Calu3 (cell line): ENCODE measurements at regions of chr20 and their contacts with region 1.

Region 1: GRCh38 chr20:41030531-41031244 is 2.1 kb downstream of the TOP1 start:
- DNase-seq: no peak
- H3K4me3 Mint-ChIP-seq: peak overlapping the region; percentile 83
- H3K27ac Mint-ChIP-seq: peak overlapping the region; percentile 97
- H3K4me1 Mint-ChIP-seq: peaks cover 64% of the 10 kb centered on the region
- H3K27me3 Mint-ChIP-seq: no peaks in the 10 kb centered on the region
- CTCF ChIP-seq: no peak

Region 2: DNA sequence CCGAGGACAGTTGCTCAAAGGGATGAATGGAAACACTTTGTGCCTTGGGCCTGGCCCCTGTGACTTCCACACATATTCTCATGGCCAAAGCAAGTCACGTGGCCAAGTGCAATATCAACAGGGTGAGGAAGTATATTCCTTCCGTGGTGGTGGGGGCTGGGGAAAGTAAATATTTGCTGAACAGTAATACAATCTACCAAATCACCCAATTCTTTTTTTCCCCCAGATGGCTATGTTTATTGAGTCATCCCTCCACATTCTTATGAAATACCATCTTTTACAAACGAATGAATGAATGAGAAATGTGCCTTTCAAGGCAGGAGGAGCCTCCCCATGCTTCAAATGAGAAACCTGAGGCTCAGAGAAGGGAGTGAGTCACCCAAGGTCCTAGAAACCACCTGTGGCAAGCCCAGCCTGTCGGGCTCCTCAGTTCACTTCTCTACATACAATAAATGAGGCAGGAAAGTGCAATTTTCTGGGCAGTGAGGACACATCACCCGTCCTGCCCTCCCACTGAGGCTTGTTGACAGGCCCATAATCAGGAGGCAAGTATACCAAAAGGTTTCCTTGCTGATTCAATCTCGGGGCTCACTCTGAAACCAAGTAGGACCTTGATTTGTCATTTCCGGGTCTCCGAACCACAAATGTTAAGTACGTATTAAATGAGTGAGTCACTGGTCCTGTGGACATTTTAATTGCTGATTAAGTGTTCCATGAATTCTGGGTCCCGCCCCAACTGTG is 27.4 kb before region 1 on chr20:
- CTCF ChIA-PET with region 1: interaction called, 3 read pairs
- intact Hi-C with region 1: loop called (anchors 1 kb)
- DNase-seq: peak; percentile 93
- H3K4me3 Mint-ChIP-seq: peak overlapping the region; percentile 54
- H3K27ac Mint-ChIP-seq: peak overlapping the region; percentile 99
- H3K4me1 Mint-ChIP-seq: peaks cover 47% of the 10 kb centered on the region
- H3K27me3 Mint-ChIP-seq: no peaks in the 10 kb centered on the region
- CTCF ChIP-seq: no peak

Region 3: DNA sequence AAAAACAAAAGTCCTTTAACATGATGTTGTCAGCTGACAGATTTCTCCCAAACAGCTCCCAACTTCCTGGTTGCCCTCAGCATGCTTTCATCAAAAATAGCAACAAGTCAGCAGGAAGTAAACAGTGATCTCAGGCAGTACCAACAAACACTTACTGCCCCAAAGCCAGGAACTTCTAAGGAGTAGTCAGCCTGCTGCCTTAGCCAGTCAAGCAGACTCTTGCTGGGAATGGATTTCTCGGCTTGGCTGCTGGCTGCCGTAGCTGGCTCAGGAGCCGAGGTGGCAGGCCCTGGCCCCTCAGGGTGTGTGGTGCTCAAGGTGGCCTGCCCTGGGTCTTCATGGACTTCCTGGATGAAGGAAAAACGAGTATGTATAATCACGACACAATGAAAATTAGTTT is 382.5 kb after region 1 on chr20:
- CTCF ChIA-PET with region 1: no interaction called
- intact Hi-C with region 1: no loop called
- DNase-seq: no peak
- H3K4me3 Mint-ChIP-seq: no peak overlapping the region
- H3K27ac Mint-ChIP-seq: no peak overlapping the region
- H3K4me1 Mint-ChIP-seq: no peaks in the 10 kb centered on the region
- H3K27me3 Mint-ChIP-seq: no peaks in the 10 kb centered on the region
- CTCF ChIP-seq: no peak